Colonic mucosa (tissue), 4 donors: ENCODE measurements at regions of chr3 and their contacts with region 1.

Region 1: DNA sequence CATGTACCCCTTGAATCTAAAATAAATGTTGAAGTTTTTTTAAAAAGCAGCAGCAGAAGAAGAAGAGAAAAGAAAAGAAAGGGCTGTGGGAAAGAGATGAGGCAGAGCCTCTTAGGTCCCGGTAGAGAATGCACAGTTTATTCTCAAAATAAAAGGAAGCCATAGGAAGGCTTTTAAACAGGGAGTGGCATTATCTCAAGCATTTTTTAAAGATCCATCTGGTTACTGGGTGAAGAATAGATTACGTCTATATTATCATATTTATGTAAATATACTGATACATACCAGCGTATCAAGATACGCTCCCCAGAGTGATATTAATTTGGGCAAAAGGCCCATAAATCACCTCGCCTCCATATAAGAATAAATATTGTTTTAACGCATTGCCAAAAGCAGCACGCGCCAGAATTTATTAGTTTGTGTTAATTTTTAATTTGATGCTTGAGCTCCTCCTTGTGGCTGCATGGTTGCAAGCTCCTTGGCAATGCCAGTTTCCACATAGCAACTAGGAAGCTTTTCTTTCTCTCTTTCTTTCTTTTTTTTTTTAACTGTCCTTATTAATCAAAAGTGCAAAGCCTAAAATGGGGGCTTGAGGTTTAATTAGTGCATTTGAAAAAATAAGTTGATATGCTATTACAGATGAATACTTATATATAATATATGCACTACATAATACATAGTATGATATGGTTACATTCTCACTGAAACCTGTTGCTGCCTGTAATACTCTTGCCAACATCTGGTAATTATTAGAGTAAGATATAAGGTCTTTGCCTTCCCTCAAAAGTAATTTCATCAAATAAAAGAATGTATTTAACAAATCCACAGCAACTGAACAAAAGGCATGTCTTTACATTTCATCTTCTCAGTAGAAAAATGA is 242.8 kb upstream of the UBE2E2 start:
- DNase-seq: peak; percentile 36
- H3K4me3 ChIP-seq: no peak overlapping the region
- H3K27ac ChIP-seq: no peak overlapping the region
- H3K4me1 ChIP-seq: no peaks in the 10 kb centered on the region
- H3K27me3 ChIP-seq: no peaks in the 10 kb centered on the region
- CTCF ChIP-seq: peak; percentile 56

Region 2: GRCh38 chr3:22098014-22098413 is 862.3 kb before region 1 on chr3:
- intact Hi-C with region 1: loop called (anchors 10 kb)
- DNase-seq: no peak
- H3K4me3 ChIP-seq: no peak overlapping the region
- H3K27ac ChIP-seq: no peak overlapping the region
- H3K4me1 ChIP-seq: no peaks in the 10 kb centered on the region
- H3K27me3 ChIP-seq: no peaks in the 10 kb centered on the region
- CTCF ChIP-seq: no peak

Region 3: GRCh38 chr3:22555753-22556435 is 404.5 kb before region 1 on chr3:
- intact Hi-C with region 1: loop called (anchors 5 kb)
- DNase-seq: no peak
- H3K4me3 ChIP-seq: no peak overlapping the region
- H3K27ac ChIP-seq: no peak overlapping the region
- H3K4me1 ChIP-seq: no peaks in the 10 kb centered on the region
- H3K27me3 ChIP-seq: no peaks in the 10 kb centered on the region
- CTCF ChIP-seq: no peak

Region 4: GRCh38 chr3:22728406-22728805 is 231.9 kb before region 1 on chr3:
- intact Hi-C with region 1: no loop called
- DNase-seq: no peak
- H3K4me3 ChIP-seq: no peak overlapping the region
- H3K27ac ChIP-seq: no peak overlapping the region
- H3K4me1 ChIP-seq: no peaks in the 10 kb centered on the region
- H3K27me3 ChIP-seq: no peaks in the 10 kb centered on the region
- CTCF ChIP-seq: no peak